Calu3 (cell line): ENCODE measurements at regions of chr4 and their contacts with region 1.

Region 1: DNA sequence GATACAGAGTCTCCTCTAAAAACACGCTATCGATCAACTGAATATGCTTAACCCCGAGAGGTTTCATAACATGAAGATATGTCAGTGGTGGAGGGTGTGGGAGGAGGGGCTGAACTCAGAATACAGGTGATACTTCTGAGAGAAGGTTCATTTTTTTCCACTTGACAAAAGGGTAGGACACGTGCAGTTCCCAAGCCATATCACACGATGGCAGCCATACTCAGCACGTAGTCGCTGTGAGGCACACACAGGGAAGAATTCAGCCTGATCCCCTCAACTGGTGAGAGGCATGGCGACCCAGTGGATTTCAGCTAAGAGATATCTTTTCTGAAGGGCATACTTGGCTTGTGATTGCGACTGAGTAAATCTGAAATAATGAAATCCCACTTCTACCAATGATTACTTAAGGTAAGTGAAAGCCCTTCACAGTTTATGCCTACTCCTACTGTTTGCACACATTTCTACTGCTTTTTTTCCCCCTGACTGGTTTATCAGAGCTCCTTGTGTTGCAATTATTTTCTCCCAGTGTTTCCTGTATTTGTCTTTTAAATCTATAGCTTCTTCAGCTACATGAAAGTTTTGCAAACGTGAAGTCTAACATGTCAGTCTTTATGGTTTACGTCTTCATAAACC is 133.1 kb downstream of the CORIN start:
- DNase-seq: peak; percentile 42
- H3K4me3 Mint-ChIP-seq: no peak overlapping the region
- H3K27ac Mint-ChIP-seq: no peak overlapping the region
- H3K4me1 Mint-ChIP-seq: peaks cover 6% of the 10 kb centered on the region
- H3K27me3 Mint-ChIP-seq: no peaks in the 10 kb centered on the region
- CTCF ChIP-seq: no peak

Region 2: GRCh38 chr4:47933840-47934239 is 229.0 kb after region 1 on chr4:
- CTCF ChIA-PET with region 1: interaction called, 9 read pairs
- intact Hi-C with region 1: loop called (anchors 2 kb)
- DNase-seq: no peak
- H3K4me3 Mint-ChIP-seq: no peak overlapping the region
- H3K27ac Mint-ChIP-seq: no peak overlapping the region
- H3K4me1 Mint-ChIP-seq: peaks cover 13% of the 10 kb centered on the region
- H3K27me3 Mint-ChIP-seq: no peaks in the 10 kb centered on the region
- CTCF ChIP-seq: peak; percentile 32

Region 3: GRCh38 chr4:48079972-48080391 is 375.2 kb after region 1 on chr4:
- CTCF ChIA-PET with region 1: no interaction called
- intact Hi-C with region 1: loop called (anchors 2 kb)
- DNase-seq: peak; percentile 45
- H3K4me3 Mint-ChIP-seq: peak overlapping the region; percentile 66
- H3K27ac Mint-ChIP-seq: peak overlapping the region; percentile 97
- H3K4me1 Mint-ChIP-seq: peaks cover 70% of the 10 kb centered on the region
- H3K27me3 Mint-ChIP-seq: no peaks in the 10 kb centered on the region
- CTCF ChIP-seq: no peak

Region 4: GRCh38 chr4:48141048-48141447 is 436.2 kb after region 1 on chr4:
- CTCF ChIA-PET with region 1: no interaction called
- intact Hi-C with region 1: loop called (anchors 10 kb)
- DNase-seq: no peak
- H3K4me3 Mint-ChIP-seq: no peak overlapping the region
- H3K27ac Mint-ChIP-seq: no peak overlapping the region
- H3K4me1 Mint-ChIP-seq: peaks cover 17% of the 10 kb centered on the region
- H3K27me3 Mint-ChIP-seq: no peaks in the 10 kb centered on the region
- CTCF ChIP-seq: no peak